Endothelial cell of umbilical vein (primary cell): ENCODE measurements at regions of chr7 and their contacts with region 1.

Region 1: GRCh38 chr7:27825891-27826290 is 85.9 kb downstream of the TAX1BP1 start:
- DNase-seq: no peak
- H3K4me3 ChIP-seq: no peak overlapping the region
- H3K27ac ChIP-seq: no peak overlapping the region
- H3K4me1 ChIP-seq: no peaks in the 10 kb centered on the region
- H3K27me3 ChIP-seq: no peaks in the 10 kb centered on the region
- CTCF ChIP-seq: no peak
- POLR2A ChIP-seq: no peak

Region 2: DNA sequence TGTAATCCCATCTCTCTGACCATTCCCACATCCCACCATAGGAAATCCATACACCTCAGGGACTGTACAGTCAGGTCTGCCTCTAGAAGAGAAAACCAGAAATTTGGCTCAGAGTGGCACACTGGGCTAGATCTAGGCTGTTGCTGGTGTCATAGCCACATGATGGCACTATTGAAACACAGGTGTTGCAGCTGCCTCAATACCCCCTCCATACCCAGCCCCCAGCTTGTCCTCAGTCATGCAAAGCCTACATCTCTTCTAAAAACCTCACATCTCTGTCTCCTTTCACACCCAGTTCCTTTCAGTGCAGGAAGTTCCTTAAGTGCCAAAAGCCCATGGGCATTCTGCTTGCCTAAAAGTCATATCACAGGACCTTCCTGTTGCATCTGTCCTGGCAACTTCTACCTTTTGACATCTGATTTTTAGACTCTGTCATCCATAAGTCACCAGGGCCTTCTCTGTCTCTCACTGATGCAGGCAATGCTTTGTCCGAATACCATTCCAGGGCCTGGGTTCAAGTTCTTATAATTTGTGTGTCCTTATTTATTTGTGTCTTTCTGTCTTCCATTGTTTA is 136.2 kb before region 1 on chr7:
- CTCF ChIA-PET with region 1: no interaction called
- POLR2A ChIA-PET with region 1: no interaction called
- dilution Hi-C with region 1: no loop called
- intact Hi-C with region 1: no loop called
- DNase-seq: peak; percentile 69
- H3K4me3 ChIP-seq: no peak overlapping the region
- H3K27ac ChIP-seq: no peak overlapping the region
- H3K4me1 ChIP-seq: peaks cover 10% of the 10 kb centered on the region
- H3K27me3 ChIP-seq: no peaks in the 10 kb centered on the region
- CTCF ChIP-seq: peak; percentile 42 to 72
- POLR2A ChIP-seq: no peak

Region 3: DNA sequence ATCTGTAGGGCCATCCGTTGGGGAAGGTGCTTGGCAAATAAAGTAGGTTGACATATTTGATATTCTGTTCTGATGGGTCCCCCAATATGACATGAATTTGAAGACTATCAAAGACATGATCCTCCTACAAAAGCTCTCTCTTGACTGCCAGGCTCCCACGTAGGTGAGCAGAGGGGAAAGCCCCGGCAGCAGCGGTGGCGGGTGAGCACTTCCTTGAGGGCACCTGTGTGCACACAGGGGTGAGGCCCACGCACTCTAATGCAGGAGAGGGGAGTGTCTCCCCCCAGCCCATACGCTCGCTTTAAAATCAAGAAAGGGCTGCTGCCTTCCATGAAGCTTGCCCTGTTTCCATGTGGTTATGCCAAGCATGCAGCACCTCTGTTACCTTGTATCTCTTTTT is 14.4 kb after region 1 on chr7:
- CTCF ChIA-PET with region 1: interaction called, 11 read pairs
- POLR2A ChIA-PET with region 1: no interaction called
- dilution Hi-C with region 1: no loop called
- intact Hi-C with region 1: no loop called
- DNase-seq: no peak
- H3K4me3 ChIP-seq: no peak overlapping the region
- H3K27ac ChIP-seq: no peak overlapping the region
- H3K4me1 ChIP-seq: peaks cover 10% of the 10 kb centered on the region
- H3K27me3 ChIP-seq: no peaks in the 10 kb centered on the region
- CTCF ChIP-seq: no peak
- POLR2A ChIP-seq: no peak